Dorsolateral prefrontal cortex (tissue), 120 donors: ENCODE measurements at regions of chr17 and their contacts with region 1.

Region 1: DNA sequence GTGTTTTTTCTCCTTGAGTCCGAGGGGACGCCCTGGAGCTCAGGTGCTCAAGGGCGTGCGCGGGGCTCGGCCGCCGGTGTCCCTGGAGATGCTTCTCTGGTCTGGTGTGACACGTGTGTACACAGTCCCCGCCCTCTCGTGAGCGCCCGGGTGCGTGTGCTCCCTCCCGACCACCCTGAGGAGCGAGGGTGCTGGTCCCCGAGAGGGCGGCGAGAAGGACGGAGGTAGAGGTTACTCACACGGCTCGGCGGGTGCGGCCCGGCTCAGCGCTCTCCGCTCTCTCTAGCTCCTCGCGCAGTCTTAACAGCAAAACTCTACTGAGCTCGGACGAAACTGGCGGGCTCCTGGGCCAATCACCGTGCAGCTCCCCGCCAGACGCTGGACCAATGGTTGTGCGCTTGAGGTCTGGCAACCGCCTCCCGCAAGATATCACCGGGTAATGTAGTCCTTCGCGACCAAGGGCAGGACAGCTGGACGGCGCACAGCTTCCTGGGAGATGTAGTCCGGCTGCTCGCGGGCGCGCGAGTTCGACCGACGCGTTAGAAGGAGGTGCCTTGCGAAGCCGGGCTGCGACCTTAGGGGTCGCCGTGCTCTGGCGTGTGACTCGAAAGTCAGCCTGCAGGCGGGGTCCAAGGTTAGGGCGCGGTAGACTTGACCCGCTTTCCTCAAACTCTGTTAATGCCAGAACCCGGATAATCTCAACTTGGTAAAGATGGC is at the start of gene SLC25A19:
- DNase-seq: peak; percentile 97 to 99 (median 99)
- H3K4me3 ChIP-seq: peak within 1 kb of the TSS; percentile 53 to 98 (median 86)
- H3K27ac ChIP-seq: peak within 1 kb of the TSS; percentile 41 to 95 (median 86)
- H3K27me3 ChIP-seq: no peaks in the 10 kb centered on the region
- CTCF ChIP-seq: peak in 42 of 56 donors; percentile 11 to 71 (median 38)
- total RNA-seq, gene SLC25A19: 8.5 to 25.5 (median 15.6) TPM

Region 2: DNA sequence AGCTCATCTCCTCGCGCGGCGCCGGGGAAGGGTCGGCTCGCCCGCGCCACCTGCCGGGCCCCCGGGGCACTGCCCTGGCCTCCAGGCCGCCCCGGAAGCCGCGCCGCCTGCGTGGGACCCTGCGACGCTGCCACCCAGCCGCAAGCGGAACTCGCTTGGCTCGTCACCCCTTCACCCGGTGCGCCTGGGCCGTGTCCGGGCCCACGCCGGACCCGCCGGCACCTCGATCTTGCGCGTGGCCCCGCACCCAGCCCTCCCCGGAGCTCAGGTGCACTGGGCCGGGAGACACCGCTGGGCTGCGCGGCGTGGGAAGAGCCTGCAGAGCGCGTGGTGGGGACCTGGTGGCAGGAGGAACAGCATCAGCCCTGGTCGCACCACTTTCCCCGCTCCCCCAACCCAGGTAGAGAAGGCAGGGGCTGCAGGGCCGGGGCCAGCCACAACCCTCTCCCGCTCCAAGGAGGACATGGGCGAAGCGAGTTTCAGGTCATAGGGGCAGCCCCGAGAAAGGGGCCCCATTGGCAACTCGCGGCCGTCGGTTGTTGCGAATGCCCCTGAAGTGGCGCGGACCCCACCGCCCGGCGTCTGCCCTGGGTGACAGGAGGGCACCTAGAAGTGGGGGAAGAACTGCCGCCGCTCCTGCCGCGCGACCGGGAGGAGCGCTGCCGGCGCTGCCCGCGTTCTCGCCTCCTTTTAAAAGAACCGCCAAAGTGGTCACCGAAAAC is 17.9 kb before region 1 on chr17:
- intact Hi-C with region 1: loop called in 1 of 2 experiments (anchors 1 kb)
- DNase-seq: peak; percentile 40 to 87 (median 70)
- H3K4me3 ChIP-seq: peak overlapping the region; percentile 62 to 98 (median 91)
- H3K27ac ChIP-seq: peak overlapping the region in 56 of 59 donors; percentile 10 to 97 (median 84)
- H3K27me3 ChIP-seq: no peaks in the 10 kb centered on the region
- CTCF ChIP-seq: peak; percentile 34 to 94 (median 73)

Region 3: GRCh38 chr17:75319904-75320691 is 30.8 kb after region 1 on chr17:
- intact Hi-C with region 1: loop called in 1 of 2 experiments (anchors 5 kb)
- DNase-seq: no peak
- H3K4me3 ChIP-seq: no peak overlapping the region
- H3K27ac ChIP-seq: no peak overlapping the region
- H3K27me3 ChIP-seq: no peaks in the 10 kb centered on the region
- CTCF ChIP-seq: no peak